OCI-LY7 (cell line): ENCODE measurements at regions of chr9 and their contacts with region 1.

Region 1: GRCh38 chr9:77903666-77904285 is 127.8 kb downstream of the GNAQ start:
- DNase-seq: no peak
- H3K4me3 ChIP-seq: no peak overlapping the region
- H3K27ac ChIP-seq: no peak overlapping the region
- H3K4me1 ChIP-seq: no peaks in the 10 kb centered on the region
- CTCF ChIP-seq: no peak

Region 2: DNA sequence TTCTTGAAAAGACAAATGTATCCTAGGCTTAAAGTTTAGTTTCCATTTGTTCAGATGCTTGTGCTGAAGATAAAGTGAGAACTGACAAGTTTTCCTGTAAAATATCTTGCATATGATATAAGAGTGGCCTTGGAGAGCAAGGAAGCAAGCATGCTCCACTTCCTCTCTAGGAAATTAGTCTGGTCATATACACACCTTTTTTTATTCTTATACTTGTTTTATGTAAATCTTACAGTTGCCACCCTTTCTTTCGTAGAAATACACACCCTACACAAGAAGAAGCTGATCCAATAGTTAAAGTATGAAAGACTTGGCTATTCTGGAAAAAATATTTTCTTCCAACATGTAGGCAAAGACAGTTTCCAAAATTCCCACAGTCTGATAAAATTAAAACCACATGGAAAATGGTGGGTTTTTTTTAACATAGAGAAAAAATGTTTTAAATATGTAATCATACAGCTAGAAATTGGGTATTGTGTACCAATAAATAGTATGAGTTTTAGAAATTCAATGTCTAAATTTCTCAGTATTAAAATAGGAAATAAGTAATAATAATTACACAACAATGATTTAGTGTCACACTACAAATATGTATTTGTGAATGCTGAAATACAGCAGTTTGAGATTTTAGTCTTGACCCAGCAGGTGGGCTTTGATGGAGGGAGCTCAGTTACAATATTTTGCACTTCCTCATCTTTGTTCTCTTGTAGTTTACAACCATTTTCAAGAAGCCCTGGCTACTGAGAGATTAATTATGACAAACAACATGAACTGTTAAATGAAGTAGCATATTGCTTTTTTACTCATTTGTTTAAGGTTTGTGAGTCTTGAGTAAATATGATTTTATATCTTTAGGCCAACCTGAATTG is 70.0 kb before region 1 on chr9:
- CTCF ChIA-PET with region 1: no interaction called
- POLR2A ChIA-PET with region 1: no interaction called
- intact Hi-C with region 1: no loop called
- DNase-seq: no peak
- H3K4me3 ChIP-seq: no peak overlapping the region
- H3K27ac ChIP-seq: no peak overlapping the region
- H3K4me1 ChIP-seq: no peaks in the 10 kb centered on the region
- CTCF ChIP-seq: no peak

Region 3: DNA sequence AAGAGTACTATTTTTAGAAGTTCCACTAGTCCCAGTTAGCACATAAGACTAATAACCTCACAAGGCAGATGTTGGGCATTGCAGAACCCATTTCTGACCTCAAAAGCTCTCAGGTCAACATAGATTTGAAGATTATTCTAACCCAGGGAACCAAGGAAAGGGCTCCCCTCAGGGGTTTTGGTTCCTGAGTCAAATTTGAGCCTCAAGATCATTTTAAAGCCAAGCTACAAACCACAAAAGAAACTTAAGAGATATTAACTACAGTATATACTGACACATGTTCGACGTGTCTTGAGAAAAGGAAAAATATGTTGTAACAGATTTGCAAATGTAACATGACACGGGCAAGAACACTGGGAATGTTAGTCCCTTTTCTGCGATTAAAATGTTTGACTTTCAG is 39.3 kb after region 1 on chr9:
- CTCF ChIA-PET with region 1: no interaction called
- POLR2A ChIA-PET with region 1: interaction called, 10 read pairs
- intact Hi-C with region 1: no loop called
- DNase-seq: no peak
- H3K4me3 ChIP-seq: no peak overlapping the region
- H3K27ac ChIP-seq: no peak overlapping the region
- H3K4me1 ChIP-seq: no peaks in the 10 kb centered on the region
- CTCF ChIP-seq: no peak